Panc1 (cell line): ENCODE measurements at regions of chr19 and their contacts with region 1.

Region 1: GRCh38 chr19:53624762-53625540 is 6.8 kb upstream of the DPRX start:
- DNase-seq: no peak
- ATAC-seq: no peak
- H3K4me3 ChIP-seq: no peak overlapping the region
- H3K27ac ChIP-seq: no peak overlapping the region
- H3K4me1 ChIP-seq: 0 out of 2 replicates have a peak, but pooled peaks cover 6% of the 10 kb centered on the region
- H3K27me3 ChIP-seq: no peaks in the 10 kb centered on the region
- CTCF ChIP-seq: no peak

Region 2: DNA sequence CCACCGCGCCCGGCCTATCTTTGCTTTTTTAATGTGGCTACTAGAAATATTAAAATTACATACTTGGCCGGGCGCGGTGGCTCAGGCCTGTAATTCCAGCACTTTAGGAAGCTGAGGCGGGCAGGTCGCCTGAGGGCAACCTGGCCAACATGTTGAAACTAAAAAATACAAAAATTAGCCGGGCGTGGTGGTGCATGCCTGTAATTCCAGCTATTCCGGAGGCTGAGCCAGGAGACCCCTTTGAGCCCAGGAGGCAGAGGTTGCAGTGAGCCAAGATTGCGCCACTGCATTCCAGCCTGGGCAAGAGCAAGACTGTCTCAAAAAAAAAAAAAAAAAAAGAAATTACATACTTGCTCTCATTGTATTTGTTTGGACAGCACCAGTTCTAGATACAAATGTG is 27.9 kb before region 1 on chr19:
- CTCF ChIA-PET with region 1: interaction called, 10 read pairs
- POLR2A ChIA-PET with region 1: no interaction called
- in situ Hi-C with region 1: no loop called
- intact Hi-C with region 1: no loop called
- DNase-seq: no peak
- ATAC-seq: no peak
- H3K4me3 ChIP-seq: no peak overlapping the region
- H3K27ac ChIP-seq: no peak overlapping the region
- H3K4me1 ChIP-seq: no peaks in the 10 kb centered on the region
- H3K27me3 ChIP-seq: no peaks in the 10 kb centered on the region
- CTCF ChIP-seq: no peak